Activated CD8-positive, alpha-beta memory T cell treated with anti-CD3 and anti-CD28 coated beads, Interleukin-2, amount 10 ng/mL, durations not matched to agents 7 days and 5 days (primary cell): ENCODE measurements at regions of chr17 and their contacts with region 1.

Region 1: DNA sequence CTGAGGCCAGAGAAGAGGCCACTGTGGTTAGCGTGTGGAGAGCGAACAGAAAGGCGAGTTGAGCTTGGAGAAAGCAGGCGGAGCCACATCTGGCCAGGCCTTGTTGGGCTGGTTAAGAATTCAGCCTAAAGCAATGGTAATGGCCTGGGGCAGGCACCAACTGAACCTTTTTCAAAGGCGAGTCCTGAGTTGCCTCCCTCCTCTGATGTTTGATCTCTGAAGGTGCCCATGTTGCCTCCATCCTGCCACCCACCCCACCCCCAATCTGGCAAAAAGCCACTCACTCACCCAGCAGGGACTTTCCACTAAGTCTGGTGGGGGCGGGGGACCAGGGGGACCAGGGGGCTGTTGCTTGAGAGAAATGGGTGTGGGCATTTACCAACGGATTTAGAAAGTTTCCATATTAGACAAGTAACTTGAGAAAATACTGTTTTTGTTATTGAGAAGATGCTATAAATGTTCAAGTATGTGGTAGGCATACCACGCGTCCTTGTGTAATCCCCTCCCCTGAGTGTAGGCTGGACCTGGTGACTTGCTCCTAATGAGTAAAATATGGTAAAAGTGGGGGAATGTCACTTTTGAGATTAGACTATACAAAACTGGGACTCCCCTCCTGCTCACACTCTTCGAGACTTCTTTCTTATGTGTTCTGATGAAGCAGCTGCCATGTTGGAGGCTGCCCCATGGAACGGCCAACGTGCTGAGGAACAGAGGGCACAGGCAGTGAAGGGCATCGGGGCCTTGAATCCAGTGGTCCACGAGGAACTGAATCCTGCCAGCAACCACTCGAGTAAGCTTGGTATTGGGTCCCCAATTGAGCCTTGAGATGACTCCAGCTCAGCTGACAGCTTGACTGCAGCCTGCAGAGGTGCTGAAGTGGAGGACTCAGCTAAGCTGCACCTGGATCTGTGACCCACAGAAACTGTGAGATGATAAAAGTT is 29.9 kb upstream of the TNS4 start:
- DNase-seq: peak; percentile 73
- ATAC-seq: peak; percentile 22
- H3K4me3 Mint-ChIP-seq: peak overlapping the region; percentile 41
- H3K27ac Mint-ChIP-seq: peak overlapping the region; percentile 80
- H3K4me1 Mint-ChIP-seq: peaks cover 57% of the 10 kb centered on the region
- H3K27me3 Mint-ChIP-seq: peaks cover 21% of the 10 kb centered on the region

Region 2: DNA sequence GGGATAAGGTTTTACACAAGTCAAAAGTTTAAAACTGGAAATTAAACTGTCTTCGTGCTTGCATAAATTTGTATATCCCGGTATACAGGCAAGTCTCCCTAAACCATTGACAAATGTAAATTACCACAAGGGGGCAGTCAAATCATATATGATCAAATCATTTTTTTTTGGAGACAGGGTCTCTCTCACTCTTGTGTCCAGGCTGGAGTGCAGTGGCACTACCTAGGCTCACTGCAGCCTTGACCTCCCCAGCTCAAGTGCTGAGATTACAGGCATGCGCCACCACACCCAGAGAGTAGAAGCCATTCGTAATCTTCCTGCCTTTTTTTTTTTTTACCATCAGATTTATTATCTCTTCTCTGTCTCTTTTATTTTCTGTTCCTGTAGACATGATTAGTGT is 132.1 kb before region 1 on chr17:
- CTCF ChIA-PET with region 1: interaction called, 53 read pairs
- DNase-seq: no peak
- ATAC-seq: no peak
- H3K4me3 Mint-ChIP-seq: no peak overlapping the region
- H3K27ac Mint-ChIP-seq: no peak overlapping the region
- H3K4me1 Mint-ChIP-seq: peaks cover 6% of the 10 kb centered on the region
- H3K27me3 Mint-ChIP-seq: no peaks in the 10 kb centered on the region

Region 3: GRCh38 chr17:40427002-40427491 is 104.3 kb before region 1 on chr17:
- CTCF ChIA-PET with region 1: interaction called, 45 read pairs
- DNase-seq: peak; percentile 67
- ATAC-seq: peak; percentile 89
- H3K4me3 Mint-ChIP-seq: no peak overlapping the region
- H3K27ac Mint-ChIP-seq: peak overlapping the region; percentile 41
- H3K4me1 Mint-ChIP-seq: peaks cover 32% of the 10 kb centered on the region
- H3K27me3 Mint-ChIP-seq: peaks cover 32% of the 10 kb centered on the region

Region 4: DNA sequence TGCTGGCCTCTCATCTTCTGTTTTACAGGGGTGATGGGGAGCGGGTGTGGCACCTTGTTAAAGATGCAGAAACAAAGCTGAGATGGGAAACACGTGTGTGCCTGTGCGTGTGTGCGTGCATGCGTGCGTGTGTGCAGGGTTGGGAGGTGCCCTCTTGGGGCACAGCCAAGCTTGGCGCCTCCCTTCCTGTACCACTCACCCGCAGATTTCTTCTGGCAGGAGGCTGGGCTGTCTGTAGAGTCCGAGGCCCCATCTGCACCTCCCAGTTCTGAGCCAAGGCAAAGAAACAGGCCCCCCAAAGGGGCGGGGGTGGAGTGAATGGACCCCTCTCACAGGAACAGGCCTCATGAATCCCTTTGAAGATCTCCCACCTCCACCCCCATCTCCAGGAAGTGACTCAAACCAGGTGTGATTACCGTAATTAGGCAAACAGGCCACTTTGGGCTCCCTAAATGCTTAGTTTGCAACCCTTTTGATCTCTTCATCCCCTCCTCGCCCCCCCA is 50.8 kb before region 1 on chr17:
- CTCF ChIA-PET with region 1: interaction called, 92 read pairs
- DNase-seq: peak; percentile 91
- ATAC-seq: peak; percentile 89
- H3K4me3 Mint-ChIP-seq: peak overlapping the region; percentile 49
- H3K27ac Mint-ChIP-seq: peak overlapping the region; percentile 94
- H3K4me1 Mint-ChIP-seq: peaks cover 53% of the 10 kb centered on the region
- H3K27me3 Mint-ChIP-seq: no peaks in the 10 kb centered on the region

Region 5: DNA sequence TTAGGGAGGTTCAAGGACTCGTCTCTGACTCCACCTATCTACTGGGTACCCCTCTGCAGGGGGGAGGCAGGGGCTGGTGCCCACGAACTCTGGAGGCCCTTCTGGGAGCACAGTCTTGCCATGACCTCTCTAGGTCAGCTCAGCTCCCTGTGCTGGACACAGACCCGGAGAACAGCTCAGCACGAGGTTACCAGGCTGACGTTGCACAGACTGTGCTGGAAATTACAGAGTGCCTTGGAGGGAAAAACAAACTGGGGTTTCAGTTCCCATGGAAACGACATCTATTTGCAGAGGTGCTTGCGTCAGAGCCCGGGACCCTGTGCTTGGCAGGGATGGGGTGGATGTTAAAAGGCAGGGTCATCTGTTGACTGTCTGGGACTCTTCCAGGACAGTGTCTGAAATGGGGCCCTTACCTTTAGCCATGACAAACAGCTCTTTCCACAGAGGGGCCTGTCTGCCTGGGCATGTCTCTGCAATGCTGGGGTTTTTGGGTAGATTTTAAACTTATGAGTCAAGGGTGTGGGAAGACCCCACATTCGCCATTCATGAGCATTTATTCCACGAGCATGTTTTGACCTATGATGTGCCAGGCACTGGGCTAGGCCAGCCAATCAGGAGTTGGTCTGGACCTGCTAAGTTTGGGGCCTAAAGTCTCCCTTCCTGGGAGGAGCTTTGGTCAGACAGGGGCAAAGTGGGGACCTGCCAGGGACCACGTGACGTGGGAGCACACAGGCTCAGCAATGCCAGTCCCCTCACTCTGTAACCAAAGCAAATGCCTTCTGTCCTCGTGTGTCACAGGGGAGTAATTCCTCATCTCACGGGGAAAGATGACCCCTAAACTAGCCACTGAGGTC is 11.5 kb after region 1 on chr17:
- CTCF ChIA-PET with region 1: interaction called, 40 read pairs
- DNase-seq: peak; percentile 49
- ATAC-seq: peak; percentile 6
- H3K4me3 Mint-ChIP-seq: no peak overlapping the region
- H3K27ac Mint-ChIP-seq: peak overlapping the region; percentile 52
- H3K4me1 Mint-ChIP-seq: peaks cover 71% of the 10 kb centered on the region
- H3K27me3 Mint-ChIP-seq: peaks cover 3% of the 10 kb centered on the region